IMR-90 (cell line): ENCODE measurements at regions of chr15 and their contacts with region 1.

Region 1: DNA sequence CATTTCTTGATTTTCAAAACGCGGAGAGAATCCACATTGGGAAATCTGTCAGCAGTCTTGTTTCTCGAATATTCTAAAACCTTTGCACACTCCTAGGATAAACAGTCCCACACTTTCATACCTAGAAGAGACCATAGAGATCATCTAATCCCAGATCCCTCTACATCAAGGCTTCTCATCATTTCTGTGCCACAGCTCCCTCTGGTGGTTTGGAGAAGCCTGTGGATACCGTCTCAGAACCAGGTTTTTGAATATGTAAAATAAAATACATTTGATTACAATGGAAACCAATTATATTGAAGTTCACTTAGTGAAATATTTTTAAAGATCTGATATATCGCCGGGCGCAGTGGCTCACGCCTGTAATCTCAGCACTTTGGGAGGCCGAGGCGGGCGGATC is 211.9 kb upstream of the GOLGA6L4 start:
- DNase-seq: peak; percentile 45
- ATAC-seq: no peak
- H3K4me3 ChIP-seq: no peak overlapping the region
- H3K27ac ChIP-seq: no peak overlapping the region
- H3K4me1 ChIP-seq: no peaks in the 10 kb centered on the region
- H3K27me3 ChIP-seq: no peaks in the 10 kb centered on the region
- CTCF ChIP-seq: peak; percentile 36
- POLR2A ChIP-seq: no peak
- RAD21 ChIP-seq: peak; percentile 43

Region 2: DNA sequence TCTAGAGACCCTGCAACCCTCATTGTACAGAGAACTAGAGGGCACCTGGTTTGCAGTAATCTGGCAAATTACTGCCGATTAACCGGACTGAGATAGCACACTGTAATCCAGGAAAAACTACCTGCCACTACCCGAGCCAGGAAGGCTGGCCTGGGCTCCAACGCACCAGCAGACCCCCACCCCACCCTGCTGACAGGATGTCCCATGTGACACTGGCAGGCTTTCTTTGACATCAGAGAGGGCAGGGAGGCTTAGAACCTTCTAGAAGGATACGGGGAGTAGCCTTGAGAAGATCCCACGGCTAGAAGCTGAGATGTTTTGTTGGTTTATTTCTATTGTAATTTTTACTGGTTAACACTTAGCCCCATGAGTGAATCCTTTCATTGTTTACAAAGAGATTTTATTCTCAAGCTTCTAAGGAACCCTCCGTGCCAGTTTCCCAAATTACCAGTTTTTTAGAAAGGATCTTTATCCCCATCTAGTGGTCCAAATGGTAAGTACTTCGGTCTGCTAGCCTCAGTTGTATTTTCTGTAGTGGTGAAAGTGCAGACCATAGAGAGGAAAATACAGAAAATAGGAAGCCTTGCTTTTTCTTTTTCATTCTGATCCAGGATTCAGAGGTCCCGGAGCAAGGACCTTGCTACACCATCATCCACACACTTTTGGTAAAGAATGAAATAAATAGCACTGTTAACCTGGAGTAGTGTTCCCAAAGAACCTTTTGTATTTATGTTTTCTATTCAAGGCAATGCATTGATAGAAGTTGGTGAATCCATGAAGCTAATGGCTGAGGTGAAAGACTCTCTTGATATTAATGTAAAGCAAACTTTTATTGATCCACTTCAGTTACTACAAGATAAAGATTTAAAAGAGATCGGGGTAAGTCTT is 451.6 kb before region 1 on chr15:
- CTCF ChIA-PET with region 1: no interaction called
- POLR2A ChIA-PET with region 1: no interaction called
- dilution Hi-C with region 1: no loop called
- in situ Hi-C with region 1: loop called (anchors 10 kb)
- intact Hi-C with region 1: loop called (anchors 5 kb)
- DNase-seq: peak; percentile 19
- ATAC-seq: peak; percentile 84
- H3K4me3 ChIP-seq: no peak overlapping the region
- H3K27ac ChIP-seq: no peak overlapping the region
- H3K4me1 ChIP-seq: no peaks in the 10 kb centered on the region
- H3K27me3 ChIP-seq: no peaks in the 10 kb centered on the region
- CTCF ChIP-seq: peak; percentile 51
- POLR2A ChIP-seq: no peak
- RAD21 ChIP-seq: peak; percentile 25; the same call in 1 of the 2 replicates

Region 3: GRCh38 chr15:83734487-83734886 is 289.1 kb before region 1 on chr15:
- CTCF ChIA-PET with region 1: no interaction called
- POLR2A ChIA-PET with region 1: no interaction called
- dilution Hi-C with region 1: no loop called
- in situ Hi-C with region 1: loop called (anchors 10 kb)
- intact Hi-C with region 1: loop called (anchors 1 kb)
- DNase-seq: no peak
- ATAC-seq: no peak
- H3K4me3 ChIP-seq: no peak overlapping the region
- H3K27ac ChIP-seq: no peak overlapping the region
- H3K4me1 ChIP-seq: no peaks in the 10 kb centered on the region
- H3K27me3 ChIP-seq: no peaks in the 10 kb centered on the region
- CTCF ChIP-seq: no peak; the same call in 1 of the 2 replicates
- POLR2A ChIP-seq: no peak
- RAD21 ChIP-seq: no peak